ENCODE measurements at regions of chr4 and their contacts with region 1.

Region 1: DNA sequence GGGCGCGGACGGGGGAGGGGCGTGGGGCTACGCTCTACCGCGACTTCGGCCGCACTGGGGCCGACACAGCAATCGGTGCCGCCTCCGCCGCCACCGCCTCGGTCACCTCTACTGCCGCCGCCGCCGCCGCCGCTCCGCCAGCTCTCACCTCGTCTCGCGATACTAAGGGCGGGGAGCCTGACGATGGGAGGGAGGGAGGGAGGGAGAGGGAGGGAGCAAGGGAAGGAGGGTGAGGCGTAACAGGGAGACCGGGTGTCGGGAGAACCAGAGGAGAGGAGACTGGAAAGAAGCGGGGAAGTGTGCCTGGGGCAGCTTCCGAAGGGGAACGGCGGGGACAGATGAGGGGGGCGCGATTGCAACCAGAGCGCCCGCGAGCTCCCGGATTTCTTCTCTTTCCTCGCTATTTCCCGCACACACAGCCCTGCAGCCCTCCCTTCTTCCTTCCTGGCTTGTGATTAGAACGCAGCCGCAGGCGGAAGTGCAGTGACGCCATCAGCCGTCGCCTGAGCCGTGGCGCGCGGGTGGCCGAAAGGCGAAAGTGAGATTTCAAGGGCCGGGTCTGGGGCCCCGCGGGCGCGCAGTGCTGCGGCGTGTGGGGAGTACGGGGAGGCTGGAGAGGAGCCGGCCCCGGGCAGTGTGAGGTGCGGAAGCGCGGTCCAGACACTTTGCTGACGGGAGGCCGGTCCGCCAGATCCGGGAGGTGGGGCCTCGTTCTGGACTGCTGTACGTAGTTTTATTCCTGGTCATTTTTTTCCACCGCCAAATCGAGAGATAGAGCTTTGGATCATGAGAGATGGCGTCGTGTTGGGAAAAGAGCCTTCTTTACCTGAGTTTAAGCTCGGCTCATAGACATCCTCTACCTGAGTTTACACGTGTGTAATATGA is at the start of gene ANKRD17:
- DNase-seq: peak; percentile 81 to 96 (median 91)

Region 2: GRCh38 chr4:73069338-73070073 is 189.4 kb before region 1 on chr4 and contains the start of gene COX18:
- intact Hi-C with region 1: loop called (anchors 1 kb)
- DNase-seq: peak; percentile 86 to 99 (median 97)

Region 3: GRCh38 chr4:73341454-73341853 is 82.5 kb after region 1 on chr4:
- intact Hi-C with region 1: no loop called
- DNase-seq: peak in 40 of 42 donors; percentile 12 to 79 (median 58)

Region 4: GRCh38 chr4:73404042-73404441 is 145.1 kb after region 1 on chr4 and contains the start of gene ALB:
- intact Hi-C with region 1: no loop called
- DNase-seq: no peak